ENCODE measurements at regions of chr1 and their contacts with region 1.

Region 1: DNA sequence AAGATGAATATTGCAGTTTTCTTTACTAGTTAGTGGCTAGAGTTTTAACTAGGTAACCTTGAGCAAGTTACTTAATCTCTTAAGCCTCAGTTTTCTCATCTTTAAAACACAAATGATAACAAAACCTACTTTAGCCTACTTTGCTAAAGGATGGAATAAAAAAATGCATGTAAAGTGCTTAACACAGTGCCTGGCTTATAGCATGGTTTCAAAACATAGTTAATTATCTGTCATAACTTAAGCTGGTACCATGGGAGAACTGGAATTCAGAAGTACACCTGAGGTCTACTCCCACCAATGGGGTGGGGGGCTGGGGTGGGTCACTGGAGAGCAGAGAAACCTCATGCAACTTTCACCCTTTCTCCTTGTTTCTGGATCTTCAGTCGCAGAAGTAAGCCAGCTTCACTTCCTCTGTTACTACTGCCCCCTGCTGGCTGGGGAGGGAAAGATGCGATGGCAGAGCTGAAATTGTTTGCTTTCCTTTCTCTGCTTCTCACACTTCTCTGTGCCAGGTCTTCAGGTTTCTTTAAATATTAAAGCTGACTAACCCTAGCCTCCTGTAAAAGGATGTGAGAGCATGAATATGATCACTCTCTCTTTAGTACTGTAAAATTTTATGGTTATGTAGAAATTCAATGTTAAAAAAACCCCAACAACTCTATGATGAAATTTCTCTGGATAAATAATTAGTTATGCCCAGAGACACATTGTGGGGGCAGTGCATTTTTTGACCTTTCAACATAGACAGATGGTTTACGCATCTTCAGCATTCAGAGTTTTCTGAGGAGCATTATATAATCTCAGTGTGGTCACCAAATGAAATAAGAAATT is 324.2 kb downstream of the HLX start:
- DNase-seq: peak; percentile 64 to 75 (median 72)
- H3K4me3 ChIP-seq: no peak overlapping the region
- H3K4me3 Mint-ChIP-seq: no peak overlapping the region
- H3K27ac ChIP-seq: no peak overlapping the region
- H3K27ac Mint-ChIP-seq: peak overlapping the region in 2 of 7 donors; percentile 45 to 73
- H3K4me1 ChIP-seq: no peaks in the 10 kb centered on the region
- H3K4me1 Mint-ChIP-seq: peaks cover 5% of the 10 kb centered on the region
- H3K27me3 ChIP-seq: no peaks in the 10 kb centered on the region
- H3K27me3 Mint-ChIP-seq: no peaks in the 10 kb centered on the region
- CTCF ChIP-seq: peak; percentile 89

Region 2: GRCh38 chr1:220810179-220810653 is 393.2 kb before region 1 on chr1:
- intact Hi-C with region 1: loop called (anchors 2 to 5 kb)
- DNase-seq: peak; percentile 58 to 72 (median 67)
- H3K4me3 ChIP-seq: no peak overlapping the region
- H3K4me3 Mint-ChIP-seq: peak overlapping the region; percentile 21 to 41
- H3K27ac ChIP-seq: no peak overlapping the region
- H3K27ac Mint-ChIP-seq: peak overlapping the region in 1 of 7 donors; percentile 27
- H3K4me1 ChIP-seq: no peaks in the 10 kb centered on the region
- H3K4me1 Mint-ChIP-seq: peaks cover 5% of the 10 kb centered on the region
- H3K27me3 ChIP-seq: no peaks in the 10 kb centered on the region
- H3K27me3 Mint-ChIP-seq: peaks cover 0 to 2% (median 0%) of the 10 kb centered on the region in 3 donors
- CTCF ChIP-seq: peak; percentile 99

Region 3: GRCh38 chr1:220873868-220874655 is 329.4 kb before region 1 on chr1:
- intact Hi-C with region 1: loop called (anchors 2 to 5 kb)
- DNase-seq: peak in 2 of 3 donors; percentile 40 to 46
- H3K4me3 ChIP-seq: no peak overlapping the region
- H3K4me3 Mint-ChIP-seq: no peak overlapping the region
- H3K27ac ChIP-seq: no peak overlapping the region
- H3K27ac Mint-ChIP-seq: no peak overlapping the region
- H3K4me1 ChIP-seq: peaks cover 33 to 38% of the 10 kb centered on the region in 2 donors
- H3K4me1 Mint-ChIP-seq: peaks cover 37% of the 10 kb centered on the region
- H3K27me3 ChIP-seq: no peaks in the 10 kb centered on the region
- H3K27me3 Mint-ChIP-seq: peaks cover 0 to 6% (median 0%) of the 10 kb centered on the region in 3 donors
- CTCF ChIP-seq: peak; percentile 91

Region 4: DNA sequence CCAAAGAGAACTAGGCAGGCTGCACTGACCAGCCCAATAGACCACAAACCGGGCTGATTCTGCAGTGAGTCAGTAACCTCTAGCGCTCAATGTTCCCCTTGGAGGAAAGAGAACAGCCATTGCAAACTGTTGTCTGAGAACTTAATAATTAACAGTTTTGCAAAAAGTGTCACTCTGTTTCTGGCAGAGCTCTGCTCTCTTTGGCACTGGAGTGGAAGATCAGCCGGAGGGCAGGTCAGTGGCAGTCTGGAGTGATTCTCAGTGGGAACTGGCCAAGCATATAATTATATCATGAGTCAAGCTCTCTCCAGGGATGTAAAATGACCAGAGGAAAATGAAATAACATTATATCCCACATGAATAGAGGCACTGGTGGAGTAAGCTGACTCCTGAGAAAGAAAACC is 85.9 kb before region 1 on chr1:
- intact Hi-C with region 1: loop called in 1 of 2 experiments (anchors 10 kb)
- DNase-seq: peak; percentile 23 to 44 (median 30)
- H3K4me3 ChIP-seq: no peak overlapping the region
- H3K4me3 Mint-ChIP-seq: peak overlapping the region in 1 of 2 donors; percentile 9
- H3K27ac ChIP-seq: no peak overlapping the region
- H3K27ac Mint-ChIP-seq: peak overlapping the region in 2 of 7 donors; percentile 35 to 48
- H3K4me1 ChIP-seq: peaks cover 3 to 11% of the 10 kb centered on the region in 2 donors
- H3K4me1 Mint-ChIP-seq: peaks cover 10% of the 10 kb centered on the region
- H3K27me3 ChIP-seq: no peaks in the 10 kb centered on the region
- H3K27me3 Mint-ChIP-seq: peaks cover 0 to 4% (median 3%) of the 10 kb centered on the region in 3 donors
- CTCF ChIP-seq: no peak

Region 5: DNA sequence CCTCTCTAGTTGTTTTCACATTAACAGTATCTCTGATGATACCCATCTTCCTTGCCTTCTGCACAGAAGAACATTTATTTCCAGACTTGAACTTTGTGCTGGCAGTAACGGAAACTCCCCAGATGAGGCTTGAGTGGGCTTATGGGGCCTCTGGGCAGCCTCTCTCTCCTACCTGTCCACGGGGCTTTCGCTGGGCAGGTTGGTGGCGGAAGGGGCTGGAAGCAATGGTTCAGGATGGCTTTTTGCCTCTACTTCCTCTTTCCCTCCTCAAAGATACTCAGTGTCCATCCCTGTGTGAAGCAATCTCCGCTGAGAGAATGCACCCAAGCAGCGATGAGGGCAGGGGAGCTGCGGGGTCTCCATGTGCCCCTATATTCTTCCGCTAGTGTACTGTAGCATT is 24.0 kb after region 1 on chr1:
- intact Hi-C with region 1: no loop called
- DNase-seq: no peak
- H3K4me3 ChIP-seq: no peak overlapping the region
- H3K4me3 Mint-ChIP-seq: no peak overlapping the region
- H3K27ac ChIP-seq: no peak overlapping the region
- H3K27ac Mint-ChIP-seq: no peak overlapping the region
- H3K4me1 ChIP-seq: no peaks in the 10 kb centered on the region
- H3K4me1 Mint-ChIP-seq: peaks cover 4% of the 10 kb centered on the region
- H3K27me3 ChIP-seq: no peaks in the 10 kb centered on the region
- H3K27me3 Mint-ChIP-seq: peaks cover 0 to 5% (median 2%) of the 10 kb centered on the region in 3 donors
- CTCF ChIP-seq: no peak

Region 6: GRCh38 chr1:221316491-221317056 is 113.1 kb after region 1 on chr1:
- intact Hi-C with region 1: no loop called
- DNase-seq: no peak
- H3K4me3 ChIP-seq: no peak overlapping the region
- H3K4me3 Mint-ChIP-seq: no peak overlapping the region
- H3K27ac ChIP-seq: no peak overlapping the region
- H3K27ac Mint-ChIP-seq: no peak overlapping the region
- H3K4me1 ChIP-seq: no peaks in the 10 kb centered on the region
- H3K4me1 Mint-ChIP-seq: no peaks in the 10 kb centered on the region
- H3K27me3 ChIP-seq: no peaks in the 10 kb centered on the region
- H3K27me3 Mint-ChIP-seq: peaks cover 0 to under 1% (median 0%) of the 10 kb centered on the region in 3 donors
- CTCF ChIP-seq: no peak

Region 7: DNA sequence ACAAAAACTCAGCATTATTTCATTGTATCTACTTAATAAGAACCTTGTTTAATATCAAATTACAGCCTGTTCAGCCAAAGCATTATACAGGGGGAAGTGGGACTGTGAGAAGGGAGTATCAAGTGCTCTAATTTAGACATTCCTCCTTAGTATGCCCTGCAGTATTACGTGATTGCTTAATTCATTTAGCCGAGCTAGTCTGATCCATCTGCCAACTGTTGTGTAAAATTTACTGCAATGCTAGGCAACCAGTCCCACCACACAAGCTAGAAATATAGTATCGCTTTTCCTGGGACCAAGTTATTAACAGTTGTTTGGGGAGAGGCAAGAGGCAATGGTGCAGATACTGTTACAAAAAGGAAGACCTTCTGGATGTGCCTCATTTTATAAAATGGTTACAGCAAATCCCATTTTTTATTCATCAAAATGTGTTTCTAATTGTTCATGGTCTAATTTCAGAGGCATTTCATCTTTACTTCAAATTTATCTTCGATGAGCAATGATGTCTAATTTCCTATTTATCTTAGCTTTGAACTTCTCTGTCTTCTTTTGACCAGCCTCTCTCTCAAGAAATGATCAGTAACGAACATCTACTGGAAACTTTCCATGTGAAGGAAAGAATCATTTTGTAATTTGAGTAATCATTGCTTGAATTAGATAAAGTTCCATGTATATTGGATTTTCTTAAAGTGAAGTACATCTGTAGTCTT is 255.2 kb after region 1 on chr1:
- intact Hi-C with region 1: no loop called
- DNase-seq: no peak
- H3K4me3 ChIP-seq: no peak overlapping the region
- H3K4me3 Mint-ChIP-seq: no peak overlapping the region
- H3K27ac ChIP-seq: no peak overlapping the region
- H3K27ac Mint-ChIP-seq: no peak overlapping the region
- H3K4me1 ChIP-seq: no peaks in the 10 kb centered on the region
- H3K4me1 Mint-ChIP-seq: no peaks in the 10 kb centered on the region
- H3K27me3 ChIP-seq: no peaks in the 10 kb centered on the region
- H3K27me3 Mint-ChIP-seq: peaks cover 0 to 1% (median 0%) of the 10 kb centered on the region in 3 donors
- CTCF ChIP-seq: no peak

Measured in CD14-positive monocyte (primary cell).